ENCODE measurements at regions of chr6 and their contacts with region 1.

Region 1: DNA sequence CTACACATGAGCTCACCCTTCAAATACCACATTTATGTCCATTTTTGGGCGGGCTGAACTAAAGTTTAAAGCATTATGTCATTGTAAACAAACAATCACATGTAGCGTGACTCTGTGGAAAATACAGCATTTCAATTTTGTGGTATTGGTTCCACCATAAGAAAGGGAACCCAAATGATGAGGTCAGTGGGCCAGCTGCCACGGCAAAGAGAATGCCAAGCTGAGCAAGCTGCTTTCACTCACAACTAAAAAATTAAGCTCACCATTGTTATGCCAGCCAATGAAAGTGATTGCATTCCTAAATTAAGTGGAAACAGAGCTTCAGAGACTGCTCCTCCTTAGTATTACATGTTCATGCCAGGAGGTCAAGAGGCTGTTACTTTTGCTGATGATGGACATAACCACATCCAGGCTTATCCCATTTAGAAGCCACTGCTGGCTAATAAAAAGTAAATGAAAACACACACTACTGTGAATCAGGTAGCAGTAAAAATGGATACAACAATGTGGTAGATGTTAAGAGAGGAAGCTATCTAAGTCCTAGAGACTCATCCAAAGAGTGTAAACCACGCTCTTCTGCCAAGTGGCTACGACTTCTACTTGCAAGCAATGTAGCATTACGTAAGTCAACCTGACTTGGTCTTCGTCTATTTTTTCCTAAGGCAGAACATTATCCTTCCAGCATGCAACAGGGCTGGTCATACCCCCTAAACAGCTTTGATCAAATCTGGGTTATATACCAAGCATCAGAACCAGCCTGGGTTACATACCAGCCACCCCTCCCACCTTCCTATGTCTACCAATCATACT is 164.8 kb downstream of the BACH2 start:
- DNase-seq: no peak
- H3K4me3 Mint-ChIP-seq: no peak overlapping the region
- H3K27ac Mint-ChIP-seq: peak overlapping the region; percentile 54
- H3K4me1 Mint-ChIP-seq: peaks cover 66% of the 10 kb centered on the region
- H3K27me3 Mint-ChIP-seq: no peaks in the 10 kb centered on the region

Region 2: GRCh38 chr6:89406141-89406540 is 725.7 kb before region 1 on chr6:
- CTCF ChIA-PET with region 1: no interaction called
- intact Hi-C with region 1: loop called (anchors 5 kb)
- DNase-seq: no peak
- H3K4me3 Mint-ChIP-seq: no peak overlapping the region
- H3K27ac Mint-ChIP-seq: no peak overlapping the region
- H3K4me1 Mint-ChIP-seq: peaks cover 11% of the 10 kb centered on the region
- H3K27me3 Mint-ChIP-seq: no peaks in the 10 kb centered on the region

Region 3: DNA sequence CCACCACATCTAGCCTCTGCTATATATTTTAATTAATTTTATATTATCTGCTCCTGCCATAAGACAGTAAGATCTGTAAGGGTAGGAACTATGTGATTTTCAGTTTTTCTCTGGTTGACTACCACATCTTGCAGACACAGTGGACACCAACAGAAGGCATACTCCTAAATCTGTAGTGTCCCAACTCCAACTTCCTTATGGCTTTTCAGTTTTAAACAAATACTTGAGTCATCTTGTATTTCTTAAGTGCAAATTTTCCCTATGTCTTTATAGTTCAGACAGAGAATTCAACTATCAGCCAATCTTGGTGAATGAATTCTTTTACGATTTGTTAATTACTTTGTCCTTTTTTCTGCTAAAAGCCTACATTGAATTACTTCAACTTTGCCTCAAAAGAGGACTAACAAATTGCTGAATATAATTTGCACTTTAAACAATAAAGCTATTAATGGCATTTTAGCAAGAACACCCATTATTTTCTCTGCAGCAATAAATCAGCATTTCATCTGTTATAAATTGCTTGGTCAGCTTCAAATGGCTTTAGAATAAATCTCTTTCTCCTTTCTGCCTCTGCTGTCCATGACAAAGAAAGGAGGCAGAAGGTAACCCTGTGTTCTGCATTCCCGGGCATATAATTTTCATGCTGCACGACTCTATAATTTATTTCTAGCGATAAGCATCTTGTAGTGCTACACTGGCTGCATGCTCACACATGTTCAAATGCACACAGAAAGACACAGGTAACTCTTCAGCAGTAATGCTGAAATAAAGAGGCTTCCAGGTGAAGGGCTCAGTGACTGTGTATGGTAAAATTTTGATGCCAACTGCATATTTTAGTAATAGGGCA is 20.0 kb after region 1 on chr6:
- CTCF ChIA-PET with region 1: no interaction called
- intact Hi-C with region 1: no loop called
- DNase-seq: no peak
- H3K4me3 Mint-ChIP-seq: no peak overlapping the region
- H3K27ac Mint-ChIP-seq: no peak overlapping the region
- H3K4me1 Mint-ChIP-seq: peaks cover 86% of the 10 kb centered on the region
- H3K27me3 Mint-ChIP-seq: no peaks in the 10 kb centered on the region

Measured in activated naive CD4-positive, alpha-beta T cell treated with anti-CD3 and anti-CD28 coated beads for 36 hours (primary cell).